ENCODE measurements at regions of chr11 and their contacts with region 1.

Region 1: GRCh38 chr11:6596239-6596877 is 7.1 kb downstream of the RRP8 start:
- DNase-seq: no peak
- ATAC-seq: no peak
- H3K4me3 ChIP-seq: no peak overlapping the region
- H3K4me3 Mint-ChIP-seq: no peak overlapping the region
- H3K27ac ChIP-seq: no peak overlapping the region
- H3K27ac Mint-ChIP-seq: no peak overlapping the region
- H3K4me1 ChIP-seq: peaks cover 25% of the 10 kb centered on the region
- H3K4me1 Mint-ChIP-seq: peaks cover 48% of the 10 kb centered on the region
- H3K27me3 ChIP-seq: no peaks in the 10 kb centered on the region
- H3K27me3 Mint-ChIP-seq: no peaks in the 10 kb centered on the region
- CTCF ChIP-seq: no peak

Region 2: DNA sequence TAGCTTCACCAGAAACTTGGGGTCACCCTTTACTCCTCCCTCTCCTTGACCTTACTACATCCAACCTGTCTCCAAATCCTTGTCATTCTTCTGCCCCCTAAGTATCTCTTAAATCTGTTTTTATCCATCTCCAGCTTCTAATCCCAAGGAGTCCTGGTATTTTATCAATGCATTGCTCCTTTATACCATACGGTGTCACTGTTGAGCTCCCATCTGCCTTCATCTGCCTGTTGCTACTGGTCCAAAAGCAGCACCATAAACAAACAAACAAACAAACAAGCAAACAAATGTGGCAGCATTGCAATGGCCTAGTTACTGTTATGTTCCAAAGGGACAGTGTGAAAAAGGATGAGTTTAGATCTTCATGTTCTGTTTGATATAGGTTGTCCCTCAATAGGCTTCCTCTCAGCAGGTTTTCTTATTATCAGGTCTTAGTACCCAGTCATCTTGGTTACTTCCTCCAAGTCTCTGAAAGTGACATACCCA is 65.0 kb before region 1 on chr11:
- CTCF ChIA-PET with region 1: interaction called, 4 read pairs
- POLR2A ChIA-PET with region 1: no interaction called
- intact Hi-C with region 1: loop called in 1 of 2 experiments (anchors 10 kb)
- DNase-seq: peak in 4 of 14 experiments; percentile 36 to 70 (median 64)
- ATAC-seq: peak; percentile 79
- H3K4me3 ChIP-seq: no peak overlapping the region
- H3K4me3 Mint-ChIP-seq: no peak overlapping the region
- H3K27ac ChIP-seq: no peak overlapping the region
- H3K27ac Mint-ChIP-seq: no peak overlapping the region
- H3K4me1 ChIP-seq: peaks cover 4% of the 10 kb centered on the region
- H3K4me1 Mint-ChIP-seq: peaks cover 14% of the 10 kb centered on the region
- H3K27me3 ChIP-seq: no peaks in the 10 kb centered on the region
- H3K27me3 Mint-ChIP-seq: no peaks in the 10 kb centered on the region
- CTCF ChIP-seq: peak; percentile 79

Measured in CD4-positive, alpha-beta T cell (primary cell).